ENCODE measurements at regions of chr5 and their contacts with region 1.

Region 1: DNA sequence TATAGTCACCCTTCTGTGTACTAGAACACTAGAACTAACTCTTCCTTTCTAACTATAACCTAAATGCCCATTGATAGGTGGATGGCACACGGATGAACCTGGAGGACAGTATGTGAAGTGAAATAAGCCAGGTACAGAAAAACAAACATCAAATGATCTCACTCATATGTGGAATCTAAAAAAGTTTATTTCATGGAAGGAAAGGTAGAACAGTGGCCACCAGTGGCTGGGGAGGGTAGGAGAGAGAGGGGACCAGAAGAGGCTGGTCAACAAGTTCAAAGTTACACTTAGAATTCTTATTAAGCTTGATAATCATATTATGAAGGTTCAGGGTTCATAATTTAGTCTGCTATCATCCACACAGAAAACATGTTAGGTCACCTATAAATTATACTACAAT is 107.6 kb upstream of the SLC12A2 start:
- DNase-seq: no peak
- ATAC-seq: no peak
- H3K4me3 ChIP-seq: peak overlapping the region in 1 of 12 donors; percentile 1
- H3K27ac ChIP-seq: peak overlapping the region in 8 of 12 donors; percentile 0 to 64 (median 43)
- H3K4me1 ChIP-seq: peaks cover 0 to 15% (median 1%) of the 10 kb centered on the region in 12 donors
- H3K27me3 ChIP-seq: no peaks in the 10 kb centered on the region
- CTCF ChIP-seq: no peak
- POLR2A ChIP-seq: no peak

Region 2: GRCh38 chr5:127650649-127651048 is 325.3 kb before region 1 on chr5:
- intact Hi-C with region 1: no loop called
- DNase-seq: no peak
- ATAC-seq: peak in 2 of 4 donors; percentile 39 to 42
- H3K4me3 ChIP-seq: no peak overlapping the region
- H3K27ac ChIP-seq: no peak overlapping the region
- H3K4me1 ChIP-seq: peaks cover 0 to 15% (median 0%) of the 10 kb centered on the region in 12 donors
- H3K27me3 ChIP-seq: no peaks in the 10 kb centered on the region
- CTCF ChIP-seq: no peak
- POLR2A ChIP-seq: no peak

Region 3: GRCh38 chr5:128038643-128039042 is 62.7 kb after region 1 on chr5:
- intact Hi-C with region 1: loop called in 1 of 10 experiments (anchors 10 kb)
- DNase-seq: no peak
- ATAC-seq: peak in 3 of 4 donors; percentile 69 to 76 (median 70)
- H3K4me3 ChIP-seq: no peak overlapping the region
- H3K27ac ChIP-seq: peak overlapping the region in 4 of 12 donors; percentile 7 to 58 (median 13)
- H3K4me1 ChIP-seq: peaks cover 0 to 27% (median 11%) of the 10 kb centered on the region in 12 donors
- H3K27me3 ChIP-seq: no peaks in the 10 kb centered on the region
- CTCF ChIP-seq: no peak
- POLR2A ChIP-seq: no peak

Region 4: DNA sequence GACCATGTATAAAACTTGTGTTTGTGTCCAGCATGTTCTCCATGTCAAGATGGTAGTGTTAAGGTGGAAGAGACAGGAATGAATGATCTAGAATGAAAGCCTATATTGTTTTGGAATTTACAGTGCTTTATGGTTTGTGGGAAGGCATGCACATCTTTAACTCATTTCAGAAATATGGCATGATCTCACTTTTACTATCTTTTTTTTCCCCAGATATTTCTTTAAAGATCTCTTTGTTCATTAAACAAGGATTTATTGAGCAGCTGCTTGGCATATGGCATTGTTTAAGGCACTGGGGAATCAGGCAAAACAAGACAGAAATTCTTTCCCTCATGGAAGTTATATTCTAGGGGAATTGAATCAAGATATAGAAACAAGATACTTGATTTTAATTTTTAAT is 159.4 kb after region 1 on chr5:
- intact Hi-C with region 1: no loop called
- DNase-seq: no peak
- ATAC-seq: no peak
- H3K4me3 ChIP-seq: no peak overlapping the region
- H3K27ac ChIP-seq: no peak overlapping the region
- H3K4me1 ChIP-seq: no peaks in the 10 kb centered on the region
- H3K27me3 ChIP-seq: no peaks in the 10 kb centered on the region
- CTCF ChIP-seq: no peak
- POLR2A ChIP-seq: no peak

Region 5: DNA sequence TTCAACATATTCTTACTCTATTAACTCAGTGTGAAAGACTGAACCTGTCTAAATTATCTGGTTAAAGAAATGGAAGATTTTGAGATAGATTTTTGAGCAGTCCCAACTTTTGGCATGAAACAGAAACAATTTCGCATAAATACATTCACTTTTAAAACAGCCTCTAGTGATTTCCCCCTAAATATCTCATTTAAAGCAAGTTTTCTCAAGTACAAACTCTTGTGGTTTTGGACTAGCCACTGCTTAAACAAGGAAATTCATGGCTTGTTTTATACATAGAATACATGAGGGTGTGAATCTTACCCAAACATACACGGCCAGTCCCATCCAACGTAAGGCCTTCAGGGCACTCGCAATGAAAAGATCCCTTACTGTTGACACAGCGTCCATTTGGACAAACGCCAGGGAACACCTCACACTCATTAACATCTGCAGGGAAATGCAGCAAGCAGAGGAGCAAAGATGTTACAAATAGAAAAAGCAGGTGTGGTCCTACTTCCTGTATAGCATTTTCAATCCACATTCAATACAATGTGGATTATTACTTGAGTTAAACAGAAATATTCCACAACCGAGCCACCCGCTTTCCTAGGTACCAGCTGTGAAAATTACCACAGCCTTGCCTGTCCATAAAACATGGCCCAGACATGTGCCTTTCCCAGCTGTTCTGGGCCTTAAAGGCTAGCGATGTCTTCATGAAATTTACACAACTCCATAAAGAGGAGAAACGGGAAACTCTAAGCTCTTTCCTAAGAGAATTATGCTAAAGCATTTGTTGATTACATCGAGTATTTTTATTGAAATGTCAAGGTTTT is 373.3 kb after region 1 on chr5:
- intact Hi-C with region 1: no loop called
- DNase-seq: peak in 2 of 5 donors; percentile 15 to 56
- ATAC-seq: peak in 2 of 4 donors; percentile 24 to 60
- H3K4me3 ChIP-seq: no peak overlapping the region
- H3K27ac ChIP-seq: no peak overlapping the region
- H3K4me1 ChIP-seq: peaks cover 0 to 13% (median 0%) of the 10 kb centered on the region in 12 donors
- H3K27me3 ChIP-seq: no peaks in the 10 kb centered on the region
- CTCF ChIP-seq: no peak
- POLR2A ChIP-seq: no peak

Measured in heart left ventricle (tissue), 16 donors.